ENCODE measurements at regions of chr4 and their contacts with region 1.

Region 1: GRCh38 chr4:76651616-76652015 is 216.6 kb downstream of the SHROOM3 start:
- DNase-seq: no peak
- CTCF ChIP-seq: no peak

Region 2: DNA sequence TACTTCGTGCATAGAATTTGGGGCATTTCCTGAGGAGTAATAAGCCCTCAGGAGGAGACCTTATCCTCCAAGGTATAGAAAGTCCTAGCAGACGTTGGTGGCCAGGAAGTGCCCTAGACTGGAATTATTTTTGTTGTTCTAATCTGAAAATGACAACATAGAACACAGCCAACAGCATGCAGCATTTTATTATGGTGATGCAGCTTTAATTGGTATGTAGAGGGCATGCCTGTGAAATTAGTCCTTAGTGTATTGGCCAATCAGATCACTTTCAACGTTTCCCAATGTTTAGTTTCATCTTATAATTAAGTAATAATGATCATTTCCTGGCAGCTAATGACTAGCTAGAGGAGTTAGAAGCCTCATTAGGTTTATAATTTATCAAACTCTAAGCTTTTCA is 17.4 kb before region 1 on chr4:
- CTCF ChIA-PET with region 1: interaction called, 10 read pairs
- POLR2A ChIA-PET with region 1: no interaction called
- DNase-seq: no peak
- CTCF ChIP-seq: no peak

Region 3: DNA sequence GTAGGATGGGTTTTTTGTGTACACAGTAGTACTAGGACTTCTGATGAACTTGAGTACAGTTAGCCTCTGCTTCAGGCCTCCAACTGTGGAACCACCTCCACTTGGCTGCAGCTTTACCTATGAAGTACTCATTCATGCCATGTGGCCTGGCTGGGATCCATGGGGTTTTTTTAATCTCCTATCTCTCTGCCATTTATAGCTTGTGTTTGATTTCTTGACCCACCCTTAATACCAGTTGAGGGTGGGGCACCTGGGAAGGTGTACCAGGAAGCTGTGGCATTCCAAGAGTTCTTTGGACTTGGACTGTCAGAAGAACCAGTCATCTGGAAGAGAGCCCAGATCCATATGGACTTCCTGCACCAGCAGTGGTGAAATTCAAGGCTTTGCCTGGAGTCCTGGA is 13.5 kb after region 1 on chr4:
- CTCF ChIA-PET with region 1: interaction called, 10 read pairs
- POLR2A ChIA-PET with region 1: no interaction called
- DNase-seq: no peak
- CTCF ChIP-seq: no peak

Region 4: GRCh38 chr4:76723924-76724323 is 72.3 kb after region 1 on chr4:
- CTCF ChIA-PET with region 1: no interaction called
- POLR2A ChIA-PET with region 1: no interaction called
- DNase-seq: no peak
- CTCF ChIP-seq: no peak

Measured in GM10248 (cell line).